Panc1 (cell line): ENCODE measurements at regions of chr9 and their contacts with region 1.

Region 1: DNA sequence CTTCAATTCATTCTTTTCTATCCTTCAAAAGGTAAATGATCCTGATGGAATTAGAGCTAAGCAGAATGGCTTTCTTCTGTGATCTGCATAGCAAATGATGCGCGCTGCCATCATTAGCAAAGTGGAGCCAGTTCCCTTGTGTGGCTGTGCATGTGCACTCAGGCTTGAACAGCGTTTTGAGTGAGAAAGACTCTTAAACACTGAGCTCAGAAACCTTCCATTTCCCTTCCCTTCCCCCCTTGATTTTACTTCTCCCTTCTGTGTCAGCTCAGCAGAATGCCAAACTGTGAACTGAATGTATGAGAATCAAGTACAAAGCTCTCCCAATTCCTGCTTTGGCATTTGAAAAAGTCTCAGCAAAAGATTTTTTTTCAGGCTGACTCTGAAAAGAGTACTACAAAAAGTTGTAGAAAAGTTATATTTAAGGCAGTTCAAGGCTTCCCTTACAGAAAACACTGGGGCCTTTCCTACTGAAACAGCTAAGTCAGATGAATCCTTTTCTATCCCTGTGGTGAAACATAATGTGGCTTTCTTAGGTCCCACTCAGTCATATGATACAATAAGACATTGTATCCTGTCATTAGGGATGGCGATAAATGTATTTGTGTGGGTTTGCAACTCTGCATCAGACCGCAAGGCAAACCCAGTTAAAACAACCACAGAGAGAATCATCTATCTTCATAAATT is 222.8 kb downstream of the CAAP1 start:
- DNase-seq: no peak
- ATAC-seq: no peak
- H3K4me3 ChIP-seq: no peak overlapping the region
- H3K27ac ChIP-seq: no peak overlapping the region
- H3K4me1 ChIP-seq: no peaks in the 10 kb centered on the region
- H3K27me3 ChIP-seq: no peaks in the 10 kb centered on the region
- CTCF ChIP-seq: no peak

Region 2: DNA sequence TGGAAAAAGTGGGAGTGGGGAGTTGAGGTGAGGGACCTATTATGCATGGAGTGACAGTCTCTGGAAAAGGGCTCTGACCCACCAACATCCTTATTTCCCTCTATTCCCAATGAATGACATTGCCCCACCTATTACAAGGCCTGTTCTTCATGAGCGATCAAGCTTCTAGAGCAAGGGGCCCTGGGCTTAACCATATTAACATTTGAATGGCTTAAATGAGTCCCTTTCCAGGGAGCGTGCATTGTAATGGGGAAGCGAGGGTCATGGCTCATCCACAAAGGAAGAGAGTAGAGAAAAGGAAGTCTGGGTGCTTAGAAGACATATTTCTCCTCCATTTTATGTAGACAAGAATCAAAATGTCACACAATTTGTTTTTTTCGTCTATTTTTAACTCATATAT is 32.7 kb before region 1 on chr9:
- CTCF ChIA-PET with region 1: no interaction called
- POLR2A ChIA-PET with region 1: interaction called, 10 read pairs
- in situ Hi-C with region 1: no loop called
- intact Hi-C with region 1: no loop called
- DNase-seq: no peak
- ATAC-seq: no peak
- H3K4me3 ChIP-seq: no peak overlapping the region
- H3K27ac ChIP-seq: no peak overlapping the region
- H3K4me1 ChIP-seq: no peaks in the 10 kb centered on the region
- H3K27me3 ChIP-seq: no peaks in the 10 kb centered on the region
- CTCF ChIP-seq: no peak

Region 3: GRCh38 chr9:26656003-26656870 is 13.6 kb before region 1 on chr9:
- CTCF ChIA-PET with region 1: no interaction called
- POLR2A ChIA-PET with region 1: no interaction called
- in situ Hi-C with region 1: no loop called
- intact Hi-C with region 1: no loop called
- DNase-seq: no peak
- ATAC-seq: no peak
- H3K4me3 ChIP-seq: no peak overlapping the region
- H3K27ac ChIP-seq: no peak overlapping the region
- H3K4me1 ChIP-seq: no peaks in the 10 kb centered on the region
- H3K27me3 ChIP-seq: no peaks in the 10 kb centered on the region
- CTCF ChIP-seq: peak; percentile 44